ENCODE measurements at regions of chr6 and their contacts with region 1.

Region 1: DNA sequence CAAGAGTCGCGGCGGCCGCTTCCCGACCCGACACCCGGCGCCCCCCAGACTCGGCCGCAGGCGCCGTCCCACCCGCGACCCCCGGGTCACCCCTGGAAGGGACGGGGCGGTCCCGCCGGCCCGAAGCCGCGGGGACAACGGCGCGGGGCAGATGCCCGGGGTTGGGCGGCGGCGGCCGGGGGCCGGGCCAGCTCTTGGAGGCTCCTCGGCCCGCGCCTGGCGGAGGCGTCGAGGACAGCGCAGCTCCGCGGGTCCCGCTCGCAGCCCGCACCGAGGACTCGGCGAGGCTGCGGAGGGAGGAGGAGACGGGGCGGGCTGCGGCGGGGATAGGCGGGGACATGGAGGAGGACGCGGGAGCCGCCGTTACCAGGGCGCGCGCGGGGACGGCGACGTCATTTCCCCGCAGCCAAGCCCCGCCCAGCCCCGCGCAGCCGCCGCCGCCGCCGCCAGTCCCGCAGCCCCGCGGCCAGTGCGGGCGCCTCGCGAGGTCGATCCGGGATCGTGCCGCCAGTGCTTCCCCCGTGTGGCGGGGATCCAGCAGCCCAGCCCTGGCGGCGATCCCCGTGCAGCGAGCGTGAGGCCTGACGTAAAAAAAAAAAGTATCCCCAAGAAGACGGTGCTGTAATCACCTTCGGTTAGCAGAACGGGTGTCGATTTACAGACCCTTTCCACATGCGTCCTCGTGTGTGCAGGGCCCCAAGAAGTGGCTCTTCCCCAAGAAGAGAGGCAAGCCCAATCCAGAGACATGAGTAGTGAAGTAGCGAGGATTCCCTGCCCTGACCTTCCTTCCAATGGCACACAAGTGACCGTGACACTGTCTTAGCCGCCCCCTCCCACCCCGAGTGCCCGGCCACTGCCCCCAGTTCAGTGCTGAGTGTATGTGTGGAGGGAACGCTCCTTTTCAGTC is at the start of gene FAM184A:
- DNase-seq: peak; percentile 61 to 89
- ATAC-seq: peak; percentile 83
- H3K4me3 ChIP-seq: peak within 1 kb of the TSS; percentile 64 to 66
- H3K27ac ChIP-seq: peak within 1 kb of the TSS in 1 of 2 donors; percentile 14
- H3K4me1 ChIP-seq: no peaks in the 10 kb centered on the region
- H3K27me3 ChIP-seq: no peaks in the 10 kb centered on the region
- total RNA-seq, gene FAM184A: 3.8 to 4.8 TPM

Region 2: GRCh38 chr6:118468682-118469465 is 609.8 kb before region 1 on chr6:
- intact Hi-C with region 1: no loop called
- DNase-seq: no peak
- ATAC-seq: no peak
- H3K4me3 ChIP-seq: no peak overlapping the region
- H3K27ac ChIP-seq: no peak overlapping the region
- H3K4me1 ChIP-seq: peaks cover 3 to 6% of the 10 kb centered on the region in 2 donors
- H3K27me3 ChIP-seq: no peaks in the 10 kb centered on the region

Region 3: GRCh38 chr6:119116712-119117281 is 38.2 kb after region 1 on chr6:
- intact Hi-C with region 1: loop called in 1 of 2 experiments (anchors 5 kb)
- DNase-seq: no peak
- ATAC-seq: no peak
- H3K4me3 ChIP-seq: no peak overlapping the region
- H3K27ac ChIP-seq: no peak overlapping the region
- H3K4me1 ChIP-seq: no peaks in the 10 kb centered on the region
- H3K27me3 ChIP-seq: no peaks in the 10 kb centered on the region